ENCODE measurements at regions of chr11 and their contacts with region 1.

Region 1: GRCh38 chr11:3894128-3894731 is 38.8 kb downstream of the STIM1 start:
- DNase-seq: peak in 5 of 10 donors; percentile 12 to 77 (median 31)
- ATAC-seq: peak; percentile 72 to 77
- H3K4me3 Mint-ChIP-seq: peak overlapping the region in 9 of 10 donors; percentile 22 to 66 (median 47)
- H3K27ac Mint-ChIP-seq: peak overlapping the region; percentile 44 to 93 (median 84)
- H3K4me1 Mint-ChIP-seq: peaks cover 27 to 74% (median 70%) of the 10 kb centered on the region in 4 donors
- H3K27me3 Mint-ChIP-seq: no peaks in the 10 kb centered on the region

Region 2: DNA sequence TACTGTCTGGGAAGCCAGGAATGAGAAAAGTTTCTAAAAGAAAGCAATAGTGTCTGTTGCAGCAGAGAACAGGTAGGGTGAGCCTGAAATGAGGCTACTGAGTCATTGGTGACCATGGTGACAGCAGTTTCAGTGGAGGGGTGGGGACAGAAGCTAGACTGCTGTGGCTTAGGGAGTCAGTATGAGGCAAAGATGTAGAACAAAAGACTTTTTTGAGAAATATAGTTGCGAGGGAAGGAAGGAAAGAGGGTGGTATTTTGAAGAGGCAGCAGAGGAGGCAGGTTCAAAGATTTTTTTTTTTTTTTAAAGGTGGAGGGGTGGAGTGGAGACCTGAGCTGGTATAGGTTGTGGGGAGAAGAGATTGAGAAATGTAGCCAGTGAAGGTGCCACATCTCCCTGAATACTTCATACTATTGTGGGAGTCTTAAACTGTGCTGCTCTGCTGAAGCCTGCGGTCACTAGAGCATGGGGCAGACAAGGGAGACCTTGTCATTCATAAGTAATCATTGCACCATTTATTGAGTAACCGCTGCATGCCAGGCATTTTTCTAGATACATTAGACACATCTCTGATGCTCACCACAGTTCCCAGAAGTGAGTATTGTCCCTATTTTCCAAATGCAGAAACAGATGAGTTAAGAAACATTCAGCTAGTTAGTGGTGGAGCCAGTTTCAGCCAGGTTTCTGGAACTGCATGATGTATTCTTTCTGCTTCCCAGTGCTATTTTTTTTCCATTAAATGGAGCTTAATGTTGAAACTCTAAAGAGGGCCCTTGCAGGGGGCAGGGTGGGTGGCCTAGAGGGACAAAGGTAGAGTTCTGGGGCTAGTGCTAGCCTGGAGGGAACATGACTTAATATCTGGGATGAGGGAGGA is 11.1 kb after region 1 on chr11:
- POLR2A ChIA-PET with region 1: interaction called, 11 read pairs
- DNase-seq: peak; percentile 23 to 87 (median 65)
- ATAC-seq: peak; percentile 93 to 96
- H3K4me3 Mint-ChIP-seq: peak overlapping the region in 9 of 10 donors; percentile 9 to 73 (median 61)
- H3K27ac Mint-ChIP-seq: peak overlapping the region; percentile 86 to 97 (median 93)
- H3K4me1 Mint-ChIP-seq: peaks cover 59 to 94% (median 83%) of the 10 kb centered on the region in 4 donors
- H3K27me3 Mint-ChIP-seq: no peaks in the 10 kb centered on the region

Measured in naive thymus-derived CD8-positive, alpha-beta T cell (primary cell).